B cell (primary cell): ENCODE measurements at regions of chr3 and their contacts with region 1.

Region 1: DNA sequence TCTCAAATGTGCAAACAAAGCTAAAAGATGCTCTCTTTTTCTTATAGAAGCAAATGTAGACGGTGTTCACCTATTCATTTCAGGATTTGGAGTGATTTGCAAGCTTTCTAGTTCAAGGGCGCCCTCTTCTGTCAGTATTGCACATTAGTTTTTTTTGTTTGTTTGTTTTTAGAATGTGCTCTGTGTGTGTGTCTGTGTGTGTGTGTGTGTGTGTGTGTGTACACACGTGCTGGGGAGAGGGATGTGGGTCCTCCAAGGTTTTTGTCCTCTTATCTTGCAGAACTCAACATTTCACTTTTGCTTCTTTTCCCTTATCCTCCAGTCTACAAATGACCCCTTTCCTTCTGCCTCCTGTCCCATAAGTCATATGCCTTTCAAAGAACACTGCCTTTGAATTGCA is 23.5 kb downstream of the DNAH1 start:
- DNase-seq: peak; percentile 83
- ATAC-seq: peak; percentile 68
- H3K4me3 ChIP-seq: no peak overlapping the region
- H3K4me3 Mint-ChIP-seq: no peak overlapping the region
- H3K27ac ChIP-seq: no peak overlapping the region
- H3K27ac Mint-ChIP-seq: peak overlapping the region; percentile 61
- H3K4me1 ChIP-seq: no peaks in the 10 kb centered on the region
- H3K4me1 Mint-ChIP-seq: peaks cover 3% of the 10 kb centered on the region
- H3K27me3 ChIP-seq: no peaks in the 10 kb centered on the region
- H3K27me3 Mint-ChIP-seq: no peaks in the 10 kb centered on the region
- CTCF ChIP-seq: peak; percentile 86

Region 2: GRCh38 chr3:51354731-51355615 is 984.6 kb before region 1 on chr3:
- CTCF ChIA-PET with region 1: no interaction called
- POLR2A ChIA-PET with region 1: no interaction called
- intact Hi-C with region 1: no loop called
- DNase-seq: no peak
- ATAC-seq: no peak
- H3K4me3 ChIP-seq: no peak overlapping the region
- H3K4me3 Mint-ChIP-seq: no peak overlapping the region
- H3K27ac ChIP-seq: no peak overlapping the region
- H3K27ac Mint-ChIP-seq: no peak overlapping the region
- H3K4me1 ChIP-seq: no peaks in the 10 kb centered on the region
- H3K4me1 Mint-ChIP-seq: no peaks in the 10 kb centered on the region
- H3K27me3 ChIP-seq: no peaks in the 10 kb centered on the region
- H3K27me3 Mint-ChIP-seq: peaks cover 15% of the 10 kb centered on the region
- CTCF ChIP-seq: no peak

Region 3: GRCh38 chr3:51371943-51372557 is 967.6 kb before region 1 on chr3:
- CTCF ChIA-PET with region 1: no interaction called
- POLR2A ChIA-PET with region 1: no interaction called
- intact Hi-C with region 1: no loop called
- DNase-seq: peak; percentile 62
- ATAC-seq: no peak
- H3K4me3 ChIP-seq: no peak overlapping the region
- H3K4me3 Mint-ChIP-seq: no peak overlapping the region
- H3K27ac ChIP-seq: no peak overlapping the region
- H3K27ac Mint-ChIP-seq: no peak overlapping the region
- H3K4me1 ChIP-seq: no peaks in the 10 kb centered on the region
- H3K4me1 Mint-ChIP-seq: no peaks in the 10 kb centered on the region
- H3K27me3 ChIP-seq: peaks cover 0 to 9% (median 0%) of the 10 kb centered on the region in 4 experiments
- H3K27me3 Mint-ChIP-seq: peaks cover 49% of the 10 kb centered on the region
- CTCF ChIP-seq: peak; percentile 67

Region 4: DNA sequence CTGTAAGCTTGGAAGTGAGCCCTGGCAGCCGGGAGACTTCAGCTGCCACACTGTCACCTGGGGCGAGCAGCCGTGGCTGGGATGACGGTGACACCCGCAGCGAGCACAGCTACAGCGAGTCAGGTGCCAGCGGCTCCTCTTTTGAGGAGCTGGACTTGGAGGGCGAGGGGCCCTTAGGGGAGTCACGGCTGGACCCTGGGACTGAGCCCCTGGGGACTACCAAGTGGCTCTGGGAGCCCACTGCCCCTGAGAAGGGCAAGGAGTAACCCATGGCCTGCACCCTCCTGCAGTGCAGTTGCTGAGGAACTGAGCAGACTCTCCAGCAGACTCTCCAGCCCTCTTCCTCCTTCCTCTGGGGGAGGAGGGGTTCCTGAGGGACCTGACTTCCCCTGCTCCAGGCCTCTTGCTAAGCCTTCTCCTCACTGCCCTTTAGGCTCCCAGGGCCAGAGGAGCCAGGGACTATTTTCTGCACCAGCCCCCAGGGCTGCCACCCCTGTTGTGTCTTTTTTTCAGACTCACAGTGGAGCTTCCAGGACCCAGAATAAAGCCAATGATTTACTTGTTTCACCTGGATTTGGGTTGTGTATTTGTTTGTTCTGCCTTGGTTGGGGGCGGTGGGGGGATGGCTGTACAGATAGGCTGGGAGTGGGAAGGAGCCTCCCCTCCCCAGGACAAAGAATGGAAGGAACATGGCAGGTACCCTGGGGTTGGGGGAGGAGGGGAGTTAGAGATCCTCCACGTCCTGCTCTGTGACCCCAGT is 635.7 kb before region 1 on chr3:
- CTCF ChIA-PET with region 1: no interaction called
- POLR2A ChIA-PET with region 1: no interaction called
- intact Hi-C with region 1: no loop called
- DNase-seq: no peak
- ATAC-seq: no peak
- H3K4me3 ChIP-seq: no peak overlapping the region
- H3K4me3 Mint-ChIP-seq: no peak overlapping the region
- H3K27ac ChIP-seq: no peak overlapping the region
- H3K27ac Mint-ChIP-seq: no peak overlapping the region
- H3K4me1 ChIP-seq: no peaks in the 10 kb centered on the region
- H3K4me1 Mint-ChIP-seq: peaks cover 2% of the 10 kb centered on the region
- H3K27me3 ChIP-seq: no peaks in the 10 kb centered on the region
- H3K27me3 Mint-ChIP-seq: no peaks in the 10 kb centered on the region
- CTCF ChIP-seq: no peak

Region 5: DNA sequence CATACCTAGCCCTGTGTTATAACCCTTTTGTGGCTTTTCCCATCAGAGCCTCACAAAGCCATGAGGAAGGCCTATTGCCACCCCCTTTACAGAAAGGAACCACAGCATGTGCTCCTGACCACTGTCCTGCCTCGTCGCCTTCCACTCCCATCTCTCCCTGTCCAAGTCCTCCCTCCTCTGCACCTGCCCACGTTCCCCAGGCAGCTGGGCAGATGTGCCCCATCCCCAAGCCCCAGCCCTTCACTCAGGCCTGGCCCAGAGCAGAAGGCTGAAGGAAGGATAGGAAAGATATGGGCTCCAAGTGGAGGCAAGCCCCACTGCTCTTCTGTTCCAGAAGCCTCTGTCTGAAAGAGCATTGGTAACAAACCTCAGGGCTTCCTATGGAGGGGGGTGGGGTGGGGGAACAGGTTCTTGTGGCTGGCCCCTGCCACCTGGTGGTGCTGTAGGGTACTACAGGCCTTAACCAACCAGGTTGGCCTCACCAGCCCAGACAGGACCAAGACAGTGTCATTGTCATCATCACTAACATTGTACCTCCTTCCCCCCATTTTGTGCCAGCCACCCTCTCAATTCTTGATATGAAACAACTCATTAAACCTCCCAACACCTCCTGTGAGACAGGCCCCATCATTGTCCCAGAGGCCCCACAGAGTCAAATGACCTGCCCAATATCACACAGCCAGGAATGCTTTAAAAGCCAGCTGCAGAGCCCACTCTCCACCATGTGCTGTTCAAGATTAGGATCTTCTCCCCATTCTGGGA is 195.4 kb before region 1 on chr3:
- CTCF ChIA-PET with region 1: interaction called, 11 read pairs
- POLR2A ChIA-PET with region 1: no interaction called
- intact Hi-C with region 1: no loop called
- DNase-seq: peak; percentile 89
- ATAC-seq: peak; percentile 99
- H3K4me3 ChIP-seq: no peak overlapping the region
- H3K4me3 Mint-ChIP-seq: no peak overlapping the region
- H3K27ac ChIP-seq: no peak overlapping the region
- H3K27ac Mint-ChIP-seq: no peak overlapping the region
- H3K4me1 ChIP-seq: peaks cover 4 to 5% of the 10 kb centered on the region in 2 donors
- H3K4me1 Mint-ChIP-seq: peaks cover 5% of the 10 kb centered on the region
- H3K27me3 ChIP-seq: no peaks in the 10 kb centered on the region
- H3K27me3 Mint-ChIP-seq: no peaks in the 10 kb centered on the region
- CTCF ChIP-seq: peak; percentile 93

Region 6: GRCh38 chr3:52231502-52232293 is 107.9 kb before region 1 on chr3:
- CTCF ChIA-PET with region 1: interaction called, 177 read pairs
- POLR2A ChIA-PET with region 1: interaction called, 16 read pairs
- intact Hi-C with region 1: loop called (anchors 1 kb)
- DNase-seq: peak; percentile 89
- ATAC-seq: peak; percentile 93
- H3K4me3 ChIP-seq: no peak overlapping the region
- H3K4me3 Mint-ChIP-seq: peak overlapping the region; percentile 37
- H3K27ac ChIP-seq: no peak overlapping the region
- H3K27ac Mint-ChIP-seq: peak overlapping the region; percentile 85
- H3K4me1 ChIP-seq: peaks cover 20 to 44% of the 10 kb centered on the region in 2 donors
- H3K4me1 Mint-ChIP-seq: peaks cover 49% of the 10 kb centered on the region
- H3K27me3 ChIP-seq: no peaks in the 10 kb centered on the region
- H3K27me3 Mint-ChIP-seq: no peaks in the 10 kb centered on the region
- CTCF ChIP-seq: peak; percentile 94

Region 7: GRCh38 chr3:52291508-52292181 is 48.0 kb before region 1 on chr3:
- CTCF ChIA-PET with region 1: interaction called, 352 read pairs
- POLR2A ChIA-PET with region 1: no interaction called
- intact Hi-C with region 1: loop called (anchors 1 kb)
- DNase-seq: peak; percentile 65
- ATAC-seq: peak; percentile 31
- H3K4me3 ChIP-seq: no peak overlapping the region
- H3K4me3 Mint-ChIP-seq: peak overlapping the region; percentile 37
- H3K27ac ChIP-seq: no peak overlapping the region
- H3K27ac Mint-ChIP-seq: peak overlapping the region; percentile 33
- H3K4me1 ChIP-seq: peaks cover 12 to 15% of the 10 kb centered on the region in 2 donors
- H3K4me1 Mint-ChIP-seq: peaks cover 30% of the 10 kb centered on the region
- H3K27me3 ChIP-seq: no peaks in the 10 kb centered on the region
- H3K27me3 Mint-ChIP-seq: no peaks in the 10 kb centered on the region
- CTCF ChIP-seq: peak; percentile 69

Region 8: GRCh38 chr3:52313774-52314188 is 25.8 kb before region 1 on chr3:
- CTCF ChIA-PET with region 1: interaction called, 29 read pairs
- POLR2A ChIA-PET with region 1: interaction called, 3 read pairs
- intact Hi-C with region 1: loop called (anchors 1 kb)
- DNase-seq: peak; percentile 79
- ATAC-seq: peak; percentile 68
- H3K4me3 ChIP-seq: no peak overlapping the region
- H3K4me3 Mint-ChIP-seq: peak overlapping the region; percentile 76
- H3K27ac ChIP-seq: peak overlapping the region; percentile 65 to 82
- H3K27ac Mint-ChIP-seq: peak overlapping the region; percentile 94
- H3K4me1 ChIP-seq: peaks cover 36 to 61% of the 10 kb centered on the region in 2 donors
- H3K4me1 Mint-ChIP-seq: peaks cover 66% of the 10 kb centered on the region
- H3K27me3 ChIP-seq: no peaks in the 10 kb centered on the region
- H3K27me3 Mint-ChIP-seq: no peaks in the 10 kb centered on the region
- CTCF ChIP-seq: no peak

Region 9: GRCh38 chr3:52372822-52373504 is 33.4 kb after region 1 on chr3:
- CTCF ChIA-PET with region 1: interaction called, 3 read pairs
- POLR2A ChIA-PET with region 1: no interaction called
- intact Hi-C with region 1: loop called (anchors 1 kb)
- DNase-seq: peak; percentile 82
- ATAC-seq: peak; percentile 90
- H3K4me3 ChIP-seq: peak overlapping the region in 3 of 5 experiments; percentile 27 to 55 (median 33)
- H3K4me3 Mint-ChIP-seq: peak overlapping the region; percentile 80
- H3K27ac ChIP-seq: peak overlapping the region; percentile 43 to 71
- H3K27ac Mint-ChIP-seq: peak overlapping the region; percentile 85
- H3K4me1 ChIP-seq: peaks cover 17 to 20% of the 10 kb centered on the region in 2 donors
- H3K4me1 Mint-ChIP-seq: peaks cover 25% of the 10 kb centered on the region
- H3K27me3 ChIP-seq: no peaks in the 10 kb centered on the region
- H3K27me3 Mint-ChIP-seq: no peaks in the 10 kb centered on the region
- CTCF ChIP-seq: no peak